Breast epithelium (tissue), 4 donors: ENCODE measurements at regions of chr6 and their contacts with region 1.

Region 1: GRCh38 chr6:115460913-115461312 is 599.8 kb downstream of the FRK start:
- DNase-seq: no peak
- H3K4me3 ChIP-seq: no peak overlapping the region
- H3K27ac ChIP-seq: no peak overlapping the region
- H3K4me1 ChIP-seq: no peaks in the 10 kb centered on the region
- H3K27me3 ChIP-seq: no peaks in the 10 kb centered on the region
- CTCF ChIP-seq: no peak
- POLR2A ChIP-seq: no peak

Region 2: DNA sequence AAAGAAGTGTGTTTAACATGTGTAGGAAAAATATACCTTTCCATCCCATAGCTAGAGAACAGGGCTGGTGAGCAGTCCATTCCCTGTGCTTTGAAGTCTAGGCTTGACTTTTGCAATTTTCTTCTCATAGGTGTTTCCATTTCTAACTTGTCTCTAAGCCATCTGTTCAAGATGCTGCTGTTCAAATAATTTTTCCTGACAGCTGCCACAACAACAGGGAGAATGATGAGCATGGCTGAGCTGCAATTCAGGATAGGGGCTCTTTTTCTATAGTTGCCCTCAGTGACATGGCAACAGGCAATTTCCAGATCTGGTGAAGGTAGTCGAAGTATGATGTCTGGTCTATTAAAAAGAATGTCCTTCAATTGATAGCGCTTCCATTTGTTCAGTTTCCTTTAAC is 1015.1 kb before region 1 on chr6:
- intact Hi-C with region 1: loop called (anchors 5 kb)
- DNase-seq: no peak
- H3K4me3 ChIP-seq: no peak overlapping the region
- H3K27ac ChIP-seq: no peak overlapping the region
- H3K4me1 ChIP-seq: no peaks in the 10 kb centered on the region
- H3K27me3 ChIP-seq: no peaks in the 10 kb centered on the region
- CTCF ChIP-seq: no peak
- POLR2A ChIP-seq: no peak

Region 3: GRCh38 chr6:114465511-114465910 is 995.4 kb before region 1 on chr6:
- intact Hi-C with region 1: no loop called
- DNase-seq: no peak
- H3K4me3 ChIP-seq: no peak overlapping the region
- H3K27ac ChIP-seq: no peak overlapping the region
- H3K4me1 ChIP-seq: no peaks in the 10 kb centered on the region
- H3K27me3 ChIP-seq: no peaks in the 10 kb centered on the region
- CTCF ChIP-seq: no peak
- POLR2A ChIP-seq: no peak

Region 4: DNA sequence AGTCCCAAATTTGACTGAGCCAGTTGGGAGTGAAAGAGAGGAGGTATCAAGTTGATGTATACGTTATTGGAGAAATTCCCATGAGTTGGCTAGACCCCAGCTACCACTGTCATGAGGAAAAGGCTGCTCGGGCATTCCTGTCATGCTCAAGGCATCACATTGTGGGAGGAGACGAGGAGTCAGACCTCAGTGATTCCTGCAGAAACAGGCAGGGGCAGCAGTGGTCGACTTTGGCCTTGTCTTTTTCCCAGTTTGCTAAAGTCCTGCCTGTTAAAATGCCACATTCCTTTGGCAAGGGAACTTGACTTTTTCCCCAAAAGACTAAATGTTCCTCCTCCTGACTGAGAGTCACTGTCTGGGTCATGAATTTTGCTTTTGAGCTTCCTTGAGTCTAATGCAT is 822.6 kb before region 1 on chr6:
- intact Hi-C with region 1: no loop called
- DNase-seq: no peak
- H3K4me3 ChIP-seq: no peak overlapping the region
- H3K27ac ChIP-seq: no peak overlapping the region
- H3K4me1 ChIP-seq: no peaks in the 10 kb centered on the region
- H3K27me3 ChIP-seq: no peaks in the 10 kb centered on the region
- CTCF ChIP-seq: no peak
- POLR2A ChIP-seq: no peak